Right lobe of liver (tissue), 6 donors: ENCODE measurements at regions of chr7 and their contacts with region 1.

Region 1: DNA sequence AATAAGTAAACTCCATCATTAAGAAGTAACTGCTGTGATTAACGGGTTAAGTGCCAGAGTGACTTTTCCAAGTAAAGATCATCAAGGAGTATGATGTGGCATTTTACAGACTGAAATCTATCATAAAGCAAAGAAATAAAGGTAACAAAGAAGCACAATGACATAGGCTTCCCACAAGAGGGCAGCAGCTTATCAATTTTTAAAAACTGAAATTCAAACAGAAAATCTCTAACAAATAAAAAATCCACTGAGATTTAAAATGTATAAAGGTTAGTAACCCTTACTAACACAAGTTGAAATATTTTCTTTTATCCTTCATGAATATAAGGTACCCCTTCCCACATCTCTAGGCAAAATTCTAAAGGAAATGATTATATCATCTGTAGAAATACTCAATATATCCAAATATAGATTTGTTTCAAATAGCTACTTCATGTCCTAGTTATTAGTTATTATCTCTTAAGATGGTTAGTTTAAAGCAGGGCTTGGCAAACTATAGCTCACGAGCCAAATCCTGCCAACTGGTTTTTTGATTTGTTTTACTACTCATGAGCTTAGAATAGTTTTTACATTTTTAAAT is 29.2 kb downstream of the FAM3C start:
- DNase-seq: no peak
- ATAC-seq: peak in 3 of 4 donors; percentile 65 to 68 (median 67)
- H3K4me3 ChIP-seq: no peak overlapping the region
- H3K27ac ChIP-seq: no peak overlapping the region
- H3K4me1 ChIP-seq: peaks cover 0 to 4% (median 0%) of the 10 kb centered on the region in 4 donors
- H3K27me3 ChIP-seq: no peaks in the 10 kb centered on the region
- CTCF ChIP-seq: peak; percentile 69 to 80 (median 76)
- POLR2A ChIP-seq: no peak

Region 2: GRCh38 chr7:121547544-121548092 is 180.7 kb after region 1 on chr7:
- intact Hi-C with region 1: loop called in 1 of 2 experiments (anchors 10 kb)
- DNase-seq: no peak
- ATAC-seq: peak; percentile 94 to 98 (median 95)
- H3K4me3 ChIP-seq: no peak overlapping the region
- H3K27ac ChIP-seq: no peak overlapping the region
- H3K4me1 ChIP-seq: no peaks in the 10 kb centered on the region
- H3K27me3 ChIP-seq: no peaks in the 10 kb centered on the region
- CTCF ChIP-seq: peak; percentile 80 to 84 (median 81)
- POLR2A ChIP-seq: no peak

Region 3: GRCh38 chr7:121563177-121563576 is 196.2 kb after region 1 on chr7:
- intact Hi-C with region 1: no loop called
- DNase-seq: no peak
- ATAC-seq: no peak
- H3K4me3 ChIP-seq: no peak overlapping the region
- H3K27ac ChIP-seq: no peak overlapping the region
- H3K4me1 ChIP-seq: no peaks in the 10 kb centered on the region
- H3K27me3 ChIP-seq: no peaks in the 10 kb centered on the region
- CTCF ChIP-seq: peak in 1 of 4 donors; percentile 10
- POLR2A ChIP-seq: no peak